Aorta (tissue), 5 donors: ENCODE measurements at regions of chr22 and their contacts with region 1.

Region 1: GRCh38 chr22:40636380-40637182 is at the start of gene MRTFA:
- DNase-seq: peak; percentile 100
- ATAC-seq: peak; percentile 98
- H3K4me3 ChIP-seq: peak within 1 kb of the TSS; percentile 79 to 86
- H3K27ac ChIP-seq: peak within 1 kb of the TSS; percentile 4 to 60
- H3K4me1 ChIP-seq: no peaks in the 10 kb centered on the region
- H3K27me3 ChIP-seq: no peaks in the 10 kb centered on the region
- total RNA-seq, gene MRTFA: 73.6 to 77.4 TPM

Region 2: GRCh38 chr22:40215266-40215665 is 421.3 kb before region 1 on chr22:
- intact Hi-C with region 1: no loop called
- DNase-seq: peak in 1 of 2 donors; percentile 71
- ATAC-seq: no peak
- H3K4me3 ChIP-seq: no peak overlapping the region
- H3K27ac ChIP-seq: no peak overlapping the region
- H3K4me1 ChIP-seq: peaks cover 0 to 5% of the 10 kb centered on the region in 2 donors
- H3K27me3 ChIP-seq: no peaks in the 10 kb centered on the region

Region 3: GRCh38 chr22:40363059-40363458 is 273.5 kb before region 1 on chr22:
- intact Hi-C with region 1: loop called in 1 of 2 experiments (anchors 10 kb)
- DNase-seq: no peak
- ATAC-seq: no peak
- H3K4me3 ChIP-seq: no peak overlapping the region
- H3K27ac ChIP-seq: no peak overlapping the region
- H3K4me1 ChIP-seq: no peaks in the 10 kb centered on the region
- H3K27me3 ChIP-seq: no peaks in the 10 kb centered on the region

Region 4: DNA sequence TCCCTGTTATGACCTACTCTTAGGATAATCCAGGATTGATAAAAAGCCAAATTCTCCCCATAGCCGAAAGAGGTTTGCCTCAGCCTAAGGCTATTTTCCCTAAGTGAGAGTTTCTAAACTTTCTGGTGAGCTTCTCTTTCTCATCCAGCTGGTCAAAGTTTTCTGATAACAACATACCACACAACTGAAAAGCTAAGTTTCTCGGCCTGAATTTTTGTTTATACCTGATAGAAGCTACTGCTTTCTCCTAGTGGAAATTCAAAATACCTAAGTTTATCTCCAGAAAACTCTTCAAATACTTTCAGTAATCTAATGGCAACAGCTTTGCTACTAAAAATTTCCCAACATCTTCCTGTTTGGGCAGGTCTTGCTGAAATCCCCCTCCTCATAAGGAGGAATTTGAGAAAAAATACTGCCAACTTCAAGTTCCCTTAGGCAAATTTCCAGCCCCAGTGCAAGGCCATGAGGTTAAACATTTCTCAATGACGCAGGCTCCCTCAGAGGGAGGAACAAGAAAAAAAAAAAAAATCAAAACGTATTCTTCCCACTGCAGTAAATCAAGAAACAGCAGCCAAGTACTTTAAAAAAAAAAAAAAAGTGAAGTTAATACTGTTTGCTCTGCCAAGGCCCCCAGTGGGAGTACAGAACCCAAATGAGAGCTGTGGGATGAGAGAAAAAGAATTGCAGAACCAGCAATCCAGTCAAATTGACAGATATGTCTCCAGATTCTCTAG is 127.0 kb before region 1 on chr22:
- intact Hi-C with region 1: loop called in 1 of 2 experiments (anchors 5 kb)
- DNase-seq: peak in 1 of 2 donors; percentile 70
- ATAC-seq: peak; percentile 72
- H3K4me3 ChIP-seq: peak overlapping the region in 1 of 2 donors; percentile 34
- H3K27ac ChIP-seq: peak overlapping the region; percentile 57 to 75
- H3K4me1 ChIP-seq: peaks cover 4 to 20% of the 10 kb centered on the region in 2 donors
- H3K27me3 ChIP-seq: no peaks in the 10 kb centered on the region

Region 5: DNA sequence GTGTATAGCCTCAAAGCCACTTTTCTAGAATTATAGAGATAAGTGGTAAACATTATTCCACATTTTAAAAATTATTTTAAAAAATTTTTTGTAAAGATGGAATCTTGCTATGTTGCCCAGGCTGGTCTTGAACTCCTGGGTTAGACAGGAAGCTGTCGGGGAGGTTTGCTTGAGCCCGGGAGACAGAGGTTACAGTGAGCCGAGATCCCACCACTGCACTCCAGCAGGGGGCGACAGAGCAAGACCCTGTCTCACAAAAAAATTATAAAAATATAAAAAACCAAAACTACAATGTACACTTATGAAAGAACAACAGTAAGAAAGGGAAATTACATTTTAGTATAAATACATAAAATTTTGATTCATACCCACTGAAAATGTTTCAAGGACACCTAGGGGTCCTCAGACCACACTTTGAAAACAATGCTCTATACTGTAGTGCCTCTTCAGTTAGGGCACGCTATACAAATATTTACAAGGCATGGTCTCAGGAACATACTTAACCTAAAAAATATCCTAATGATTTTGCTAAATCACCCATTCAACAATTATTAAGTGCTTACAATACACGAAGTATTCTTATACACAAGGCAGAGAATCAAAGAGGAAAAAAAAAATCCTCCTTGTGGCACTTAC is 111.2 kb before region 1 on chr22:
- intact Hi-C with region 1: loop called (anchors 5 kb)
- DNase-seq: peak; percentile 63 to 83
- ATAC-seq: no peak
- H3K4me3 ChIP-seq: no peak overlapping the region
- H3K27ac ChIP-seq: no peak overlapping the region
- H3K4me1 ChIP-seq: peaks cover 3 to 4% of the 10 kb centered on the region in 2 donors
- H3K27me3 ChIP-seq: no peaks in the 10 kb centered on the region

Region 6: DNA sequence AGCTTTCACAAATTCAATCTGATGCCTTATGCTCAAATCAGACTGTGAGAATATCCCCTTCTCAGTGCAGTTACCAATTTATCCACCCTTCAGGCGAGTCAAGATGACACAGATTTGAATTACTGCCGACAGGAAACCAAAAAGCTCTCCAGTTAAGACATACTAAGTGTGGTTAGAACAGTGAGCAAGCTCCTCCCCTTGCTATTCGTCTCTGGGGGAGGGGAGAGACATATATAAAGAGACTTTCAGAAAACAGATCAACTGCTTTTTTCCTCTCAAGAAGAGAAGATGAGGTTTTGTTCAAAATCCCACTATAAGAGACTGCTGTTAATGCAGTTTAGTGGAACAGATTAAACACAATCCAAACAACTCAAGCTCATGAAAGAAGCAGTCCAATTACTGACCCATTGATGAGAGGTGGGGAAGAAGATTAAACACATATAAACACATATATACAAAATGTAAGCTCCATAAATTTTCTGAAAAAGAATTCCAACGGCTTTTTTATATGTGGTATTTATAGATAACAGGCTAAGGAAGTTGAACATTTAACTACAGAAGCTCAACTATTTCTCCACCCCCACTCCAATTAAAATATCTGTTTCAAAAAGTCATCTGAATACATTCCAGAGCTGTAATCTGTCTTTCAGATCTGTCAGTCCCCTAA is 102.7 kb before region 1 on chr22:
- intact Hi-C with region 1: loop called (anchors 5 kb)
- DNase-seq: no peak
- ATAC-seq: peak; percentile 65
- H3K4me3 ChIP-seq: peak overlapping the region in 1 of 2 donors; percentile 34
- H3K27ac ChIP-seq: peak overlapping the region; percentile 75 to 76
- H3K4me1 ChIP-seq: peaks cover 2 to 8% of the 10 kb centered on the region in 2 donors
- H3K27me3 ChIP-seq: no peaks in the 10 kb centered on the region

Region 7: DNA sequence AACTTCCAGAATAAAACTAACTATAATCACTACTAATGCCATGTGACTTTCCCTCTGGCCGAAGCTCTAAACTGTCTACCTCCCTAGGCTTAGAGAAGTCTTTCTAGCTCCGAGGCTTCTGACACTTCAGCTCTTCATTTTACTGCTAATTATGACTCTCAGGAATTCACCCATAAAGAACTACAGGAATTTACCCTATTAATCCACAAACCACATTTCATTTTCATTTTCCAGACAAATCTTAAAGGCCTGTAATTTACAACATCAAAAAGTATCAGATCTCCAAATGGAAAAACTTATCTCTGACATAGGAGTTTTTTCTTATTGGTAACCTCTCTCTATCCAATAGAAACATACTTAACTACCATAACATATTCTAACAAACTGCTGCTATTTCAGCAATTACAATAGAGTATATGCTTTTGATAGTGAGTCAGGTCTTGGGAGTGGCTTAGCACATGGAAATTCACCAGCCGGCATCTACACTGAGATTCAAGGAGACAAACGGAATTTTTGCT is 33.4 kb before region 1 on chr22:
- intact Hi-C with region 1: loop called in 1 of 2 experiments (anchors 5 kb)
- DNase-seq: no peak
- ATAC-seq: no peak
- H3K4me3 ChIP-seq: no peak overlapping the region
- H3K27ac ChIP-seq: no peak overlapping the region
- H3K4me1 ChIP-seq: peaks cover 4 to 11% of the 10 kb centered on the region in 2 donors
- H3K27me3 ChIP-seq: no peaks in the 10 kb centered on the region